ENCODE measurements at regions of chr19 and their contacts with region 1.

Region 1: GRCh38 chr19:46025835-46026234 is 3.0 kb upstream of the PGLYRP1 start:
- DNase-seq: no peak
- ATAC-seq: no peak
- H3K4me3 ChIP-seq: no peak overlapping the region
- H3K27ac ChIP-seq: no peak overlapping the region
- H3K4me1 ChIP-seq: no peaks in the 10 kb centered on the region
- H3K27me3 ChIP-seq: peaks cover 7 to 64% (median 27%) of the 10 kb centered on the region in 9 donors
- CTCF ChIP-seq: no peak
- POLR2A ChIP-seq: no peak

Region 2: GRCh38 chr19:46056536-46056935 is 30.7 kb after region 1 on chr19:
- intact Hi-C with region 1: no loop called
- DNase-seq: no peak
- ATAC-seq: no peak
- H3K4me3 ChIP-seq: no peak overlapping the region
- H3K27ac ChIP-seq: no peak overlapping the region
- H3K4me1 ChIP-seq: no peaks in the 10 kb centered on the region
- H3K27me3 ChIP-seq: peaks cover 0 to 55% (median 15%) of the 10 kb centered on the region in 9 donors
- CTCF ChIP-seq: no peak
- POLR2A ChIP-seq: no peak

Region 3: GRCh38 chr19:46186101-46187100 is 160.6 kb after region 1 on chr19:
- intact Hi-C with region 1: loop called in 5 of 10 experiments (anchors 1 to 5 kb)
- DNase-seq: no peak
- ATAC-seq: no peak
- H3K4me3 ChIP-seq: no peak overlapping the region
- H3K27ac ChIP-seq: no peak overlapping the region
- H3K4me1 ChIP-seq: no peaks in the 10 kb centered on the region
- H3K27me3 ChIP-seq: peaks cover 0 to 47% (median 13%) of the 10 kb centered on the region in 9 donors
- CTCF ChIP-seq: no peak
- POLR2A ChIP-seq: no peak

Region 4: DNA sequence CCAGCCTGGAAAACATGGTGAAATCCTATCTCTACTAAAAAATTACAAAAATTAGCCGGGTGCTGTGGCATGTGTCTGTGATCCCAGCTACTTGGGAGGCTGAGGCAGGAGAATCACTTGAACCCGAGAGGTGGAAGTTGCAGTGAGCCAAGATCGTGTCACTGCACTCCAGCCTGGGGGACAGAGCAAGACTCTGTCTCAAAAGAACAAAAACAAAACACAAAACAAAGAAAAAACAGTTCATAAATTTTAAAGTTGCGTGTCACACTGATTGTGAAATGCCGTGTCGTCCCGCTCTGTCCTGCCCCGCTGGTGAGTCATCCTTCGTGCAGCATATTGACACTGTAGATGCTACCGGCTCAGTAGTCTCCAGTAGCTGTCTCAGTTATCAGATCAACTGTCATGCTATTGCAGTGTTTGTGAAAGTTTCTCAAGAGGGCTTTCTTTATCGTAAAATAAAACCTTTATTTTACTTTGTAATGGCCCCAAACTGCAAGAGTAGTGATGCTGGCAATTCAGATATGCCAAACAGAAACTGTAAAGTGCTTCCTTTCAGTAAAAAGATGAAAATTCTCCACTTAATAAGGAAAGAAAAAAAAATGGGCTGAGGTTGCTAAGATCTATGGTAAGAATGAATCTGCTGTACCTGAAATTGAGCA is 167.3 kb after region 1 on chr19:
- intact Hi-C with region 1: loop called in 5 of 10 experiments (anchors 1 to 5 kb)
- DNase-seq: peak in 1 of 5 donors; percentile 39
- ATAC-seq: peak in 2 of 4 donors; percentile 48 to 55
- H3K4me3 ChIP-seq: no peak overlapping the region
- H3K27ac ChIP-seq: no peak overlapping the region
- H3K4me1 ChIP-seq: peaks cover 0 to 18% (median 0%) of the 10 kb centered on the region in 12 donors
- H3K27me3 ChIP-seq: peaks cover 0 to 52% (median 12%) of the 10 kb centered on the region in 9 donors
- CTCF ChIP-seq: no peak
- POLR2A ChIP-seq: no peak

Region 5: GRCh38 chr19:46265217-46265828 is 239.5 kb after region 1 on chr19:
- intact Hi-C with region 1: loop called (anchors 1 to 5 kb)
- DNase-seq: peak in 4 of 5 donors; percentile 38 to 54 (median 48)
- ATAC-seq: peak; percentile 71 to 89 (median 74)
- H3K4me3 ChIP-seq: no peak overlapping the region
- H3K27ac ChIP-seq: no peak overlapping the region
- H3K4me1 ChIP-seq: peaks cover 0 to 4% (median 0%) of the 10 kb centered on the region in 12 donors
- H3K27me3 ChIP-seq: peaks cover 0 to 38% (median 7%) of the 10 kb centered on the region in 9 donors
- CTCF ChIP-seq: peak; percentile 79 to 88 (median 86)
- POLR2A ChIP-seq: no peak

Measured in heart left ventricle (tissue), 16 donors.